CD4-positive, alpha-beta T cell (primary cell): ENCODE measurements at regions of chr13 and their contacts with region 1.

Region 1: GRCh38 chr13:112942689-112943308 is 26.2 kb upstream of the MCF2L start:
- DNase-seq: peak; percentile 89 to 99 (median 95)
- ATAC-seq: peak; percentile 97
- H3K4me3 ChIP-seq: peak overlapping the region; percentile 45
- H3K4me3 Mint-ChIP-seq: peak overlapping the region; percentile 90
- H3K27ac ChIP-seq: no peak overlapping the region
- H3K27ac Mint-ChIP-seq: no peak overlapping the region
- H3K4me1 ChIP-seq: peaks cover 16% of the 10 kb centered on the region
- H3K4me1 Mint-ChIP-seq: peaks cover 6% of the 10 kb centered on the region
- H3K27me3 ChIP-seq: peaks cover 7 to 11% of the 10 kb centered on the region in 2 experiments
- H3K27me3 Mint-ChIP-seq: peaks cover 52% of the 10 kb centered on the region
- CTCF ChIP-seq: peak; percentile 97

Region 2: DNA sequence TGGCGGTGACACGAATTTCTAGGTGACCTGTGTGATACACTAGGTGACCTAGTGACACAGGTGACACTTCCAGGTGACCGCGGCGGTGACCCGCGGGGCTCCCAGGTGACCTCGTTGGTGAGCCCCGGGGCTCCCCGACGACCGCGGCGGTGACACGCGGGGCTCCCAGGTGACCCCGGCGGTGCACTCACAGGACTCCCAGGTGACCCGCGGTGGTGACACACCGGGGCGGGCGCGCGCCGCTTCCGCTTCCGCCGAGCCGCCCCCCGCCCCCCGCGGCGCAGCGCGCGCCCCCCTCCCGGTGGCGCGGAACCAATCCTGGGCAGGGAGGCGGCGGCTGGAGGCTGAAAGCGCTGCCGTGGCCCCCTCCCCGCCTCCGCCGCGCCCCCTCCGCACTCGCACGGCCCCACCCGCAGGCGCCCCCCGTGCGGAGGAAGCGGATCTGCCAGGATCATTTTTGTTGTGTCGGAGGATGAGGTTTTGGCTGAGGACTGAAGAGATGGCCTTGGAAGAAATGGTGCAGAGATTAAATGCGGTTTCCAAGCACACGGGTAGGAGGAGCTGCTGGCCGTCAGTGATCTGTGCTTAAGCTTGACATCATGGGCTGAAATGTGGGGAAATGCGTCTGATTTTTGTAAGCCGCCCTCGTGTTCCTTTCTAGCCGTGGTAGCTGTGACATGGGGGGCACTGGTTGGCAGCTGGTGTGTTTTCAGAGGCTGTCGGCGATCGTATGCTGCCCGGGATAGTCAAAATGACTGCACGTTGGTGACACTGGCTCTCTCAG is 26.3 kb after region 1 on chr13 and contains the start of gene MCF2L:
- CTCF ChIA-PET with region 1: interaction called, 5 read pairs
- POLR2A ChIA-PET with region 1: interaction called, 15 read pairs
- intact Hi-C with region 1: loop called (anchors 1 to 2 kb)
- DNase-seq: peak; percentile 46 to 86 (median 66)
- ATAC-seq: peak; percentile 78
- H3K4me3 ChIP-seq: peak within 1 kb of the TSS; percentile 58
- H3K4me3 Mint-ChIP-seq: peak within 1 kb of the TSS; percentile 89
- H3K27ac ChIP-seq: peak within 1 kb of the TSS; percentile 44 to 72
- H3K27ac Mint-ChIP-seq: peak within 1 kb of the TSS; percentile 80
- H3K4me1 ChIP-seq: peaks cover 34% of the 10 kb centered on the region
- H3K4me1 Mint-ChIP-seq: peaks cover 37% of the 10 kb centered on the region
- H3K27me3 ChIP-seq: no peaks in the 10 kb centered on the region
- H3K27me3 Mint-ChIP-seq: no peaks in the 10 kb centered on the region
- CTCF ChIP-seq: no peak
- total RNA-seq, gene MCF2L: 13.0 to 13.5 TPM

Region 3: GRCh38 chr13:113153810-113154748 is 211.3 kb after region 1 on chr13:
- CTCF ChIA-PET with region 1: no interaction called
- POLR2A ChIA-PET with region 1: no interaction called
- intact Hi-C with region 1: loop called in 1 of 2 experiments (anchors 5 kb)
- DNase-seq: peak; percentile 59 to 88 (median 72)
- ATAC-seq: peak; percentile 83
- H3K4me3 ChIP-seq: peak overlapping the region; percentile 74
- H3K4me3 Mint-ChIP-seq: peak overlapping the region; percentile 90
- H3K27ac ChIP-seq: peak overlapping the region in 1 of 2 donors; percentile 73
- H3K27ac Mint-ChIP-seq: peak overlapping the region; percentile 84
- H3K4me1 ChIP-seq: peaks cover 33% of the 10 kb centered on the region
- H3K4me1 Mint-ChIP-seq: peaks cover 21% of the 10 kb centered on the region
- H3K27me3 ChIP-seq: no peaks in the 10 kb centered on the region
- H3K27me3 Mint-ChIP-seq: no peaks in the 10 kb centered on the region
- CTCF ChIP-seq: no peak

Region 4: GRCh38 chr13:113164492-113164891 is 221.7 kb after region 1 on chr13:
- CTCF ChIA-PET with region 1: no interaction called
- POLR2A ChIA-PET with region 1: no interaction called
- intact Hi-C with region 1: no loop called
- DNase-seq: no peak
- ATAC-seq: peak; percentile 12
- H3K4me3 ChIP-seq: no peak overlapping the region
- H3K4me3 Mint-ChIP-seq: no peak overlapping the region
- H3K27ac ChIP-seq: no peak overlapping the region
- H3K27ac Mint-ChIP-seq: peak overlapping the region; percentile 60
- H3K4me1 ChIP-seq: peaks cover 19% of the 10 kb centered on the region
- H3K4me1 Mint-ChIP-seq: peaks cover 37% of the 10 kb centered on the region
- H3K27me3 ChIP-seq: no peaks in the 10 kb centered on the region
- H3K27me3 Mint-ChIP-seq: no peaks in the 10 kb centered on the region
- CTCF ChIP-seq: no peak

Region 5: DNA sequence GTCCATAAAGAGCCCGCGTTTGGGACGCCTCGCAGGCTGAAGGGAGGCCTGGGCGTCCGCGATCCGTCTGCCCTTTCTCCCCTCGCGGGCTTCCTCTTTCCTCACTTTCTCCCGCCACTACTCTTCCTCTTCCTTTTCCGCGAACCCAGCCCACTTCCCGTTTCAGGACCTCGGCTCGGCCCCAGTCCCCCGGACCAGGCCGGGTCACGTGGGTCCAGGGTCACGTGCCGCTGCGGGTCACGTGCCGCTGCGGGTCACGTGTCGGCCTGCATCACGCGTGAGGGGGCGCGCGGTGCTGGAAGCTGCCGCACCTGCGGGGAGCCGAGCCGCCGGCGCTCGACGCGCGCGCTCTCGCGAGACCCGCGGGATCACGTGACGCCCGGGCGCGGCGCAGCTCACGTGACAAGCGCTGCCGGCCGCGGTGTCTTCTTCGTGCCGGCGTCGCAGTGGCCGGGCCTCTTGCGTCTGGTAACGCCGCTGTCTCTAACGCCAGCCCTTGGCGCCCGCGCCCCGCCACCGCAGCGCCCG is 354.1 kb after region 1 on chr13 and contains the start of gene LAMP1:
- CTCF ChIA-PET with region 1: no interaction called
- POLR2A ChIA-PET with region 1: no interaction called
- intact Hi-C with region 1: loop called in 1 of 2 experiments (anchors 10 kb)
- DNase-seq: peak; percentile 97 to 100 (median 99)
- ATAC-seq: peak; percentile 83
- H3K4me3 ChIP-seq: peak within 1 kb of the TSS; percentile 77
- H3K4me3 Mint-ChIP-seq: peak within 1 kb of the TSS; percentile 100
- H3K27ac ChIP-seq: peak within 1 kb of the TSS; percentile 83 to 88
- H3K27ac Mint-ChIP-seq: peak within 1 kb of the TSS; percentile 99
- H3K4me1 ChIP-seq: peaks cover 37% of the 10 kb centered on the region
- H3K4me1 Mint-ChIP-seq: peaks cover 36% of the 10 kb centered on the region
- H3K27me3 ChIP-seq: peaks cover 3 to 8% of the 10 kb centered on the region in 2 experiments
- H3K27me3 Mint-ChIP-seq: peaks cover 20% of the 10 kb centered on the region
- CTCF ChIP-seq: no peak
- total RNA-seq, gene LAMP1: 72.2 to 80.7 TPM

Region 6: GRCh38 chr13:113562085-113562749 is 619.4 kb after region 1 on chr13:
- CTCF ChIA-PET with region 1: no interaction called
- POLR2A ChIA-PET with region 1: no interaction called
- intact Hi-C with region 1: loop called in 1 of 2 experiments (anchors 2 kb)
- DNase-seq: peak in 10 of 14 experiments; percentile 9 to 48 (median 31)
- ATAC-seq: peak; percentile 56
- H3K4me3 ChIP-seq: no peak overlapping the region
- H3K4me3 Mint-ChIP-seq: no peak overlapping the region
- H3K27ac ChIP-seq: no peak overlapping the region
- H3K27ac Mint-ChIP-seq: no peak overlapping the region
- H3K4me1 ChIP-seq: peaks cover 3% of the 10 kb centered on the region
- H3K4me1 Mint-ChIP-seq: peaks cover 6% of the 10 kb centered on the region
- H3K27me3 ChIP-seq: no peaks in the 10 kb centered on the region
- H3K27me3 Mint-ChIP-seq: peaks cover 9% of the 10 kb centered on the region
- CTCF ChIP-seq: peak; percentile 23